ENCODE measurements at regions of chr7 and their contacts with region 1.

Region 1: GRCh38 chr7:135170274-135170997 is at the start of gene CYREN:
- DNase-seq: peak; percentile 96
- ATAC-seq: peak; percentile 90
- H3K4me3 Mint-ChIP-seq: peak within 1 kb of the TSS; percentile 83
- H3K27ac Mint-ChIP-seq: peak within 1 kb of the TSS; percentile 93
- H3K4me1 Mint-ChIP-seq: peaks cover 45% of the 10 kb centered on the region
- H3K27me3 Mint-ChIP-seq: no peaks in the 10 kb centered on the region
- CTCF ChIP-seq: peak; percentile 48
- total RNA-seq, gene CYREN: 32.5 to 35.4 TPM

Region 2: DNA sequence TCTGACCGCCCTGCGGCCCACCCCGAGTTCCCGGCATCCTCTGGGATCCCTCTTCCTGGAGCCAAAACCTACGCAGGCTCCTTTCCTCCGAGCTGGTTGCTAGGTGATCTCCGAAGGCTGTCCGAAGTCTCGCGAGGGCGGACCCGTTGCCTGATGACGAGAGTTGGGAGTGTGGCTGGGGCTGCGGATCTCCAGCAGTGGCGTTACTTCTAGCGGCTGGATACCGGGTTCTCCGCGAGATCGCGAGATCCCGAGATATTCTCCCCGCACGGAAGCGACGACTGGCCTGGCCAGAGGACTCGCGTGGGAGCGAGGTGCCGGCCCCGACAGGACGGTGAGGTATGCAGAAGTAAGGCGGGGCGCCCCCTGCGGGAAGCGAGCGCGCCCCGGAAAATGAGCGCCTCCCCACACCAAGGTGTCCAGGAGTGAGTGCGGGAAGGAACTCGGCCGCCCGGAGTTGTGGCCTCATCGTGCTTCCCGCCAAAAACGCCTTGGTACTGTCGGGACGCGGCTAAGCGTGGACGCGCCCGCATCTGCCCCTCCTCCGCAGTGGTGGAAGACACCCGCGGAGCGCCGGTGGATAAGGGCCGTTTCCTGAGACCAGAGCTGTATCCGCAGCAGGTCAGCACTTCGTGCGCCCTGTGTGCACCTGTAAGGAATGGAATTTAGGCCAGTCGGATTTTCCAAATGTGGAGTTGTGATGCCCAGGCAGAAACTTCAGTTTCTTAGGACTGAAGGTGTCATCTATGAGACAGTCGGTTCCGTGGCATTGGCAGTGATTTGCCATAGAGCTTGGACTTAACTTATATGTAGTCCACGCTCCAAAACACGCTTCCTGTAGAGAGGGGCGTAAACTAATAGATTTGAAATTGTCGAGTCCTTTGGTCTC is 183.8 kb before region 1 on chr7 and contains the start of gene AGBL3:
- CTCF ChIA-PET with region 1: interaction called, 41 read pairs
- POLR2A ChIA-PET with region 1: interaction called, 22 read pairs
- intact Hi-C with region 1: loop called (anchors 2 kb)
- DNase-seq: peak; percentile 97
- ATAC-seq: peak; percentile 93
- H3K4me3 Mint-ChIP-seq: peak within 1 kb of the TSS; percentile 97
- H3K27ac Mint-ChIP-seq: peak within 1 kb of the TSS; percentile 98
- H3K4me1 Mint-ChIP-seq: peaks cover 38% of the 10 kb centered on the region
- H3K27me3 Mint-ChIP-seq: no peaks in the 10 kb centered on the region
- CTCF ChIP-seq: peak; percentile 76
- total RNA-seq, gene AGBL3: 2.7 to 2.9 TPM

Region 3: GRCh38 chr7:134992626-134993179 is 177.7 kb before region 1 on chr7:
- CTCF ChIA-PET with region 1: interaction called, 41 read pairs
- POLR2A ChIA-PET with region 1: interaction called, 14 read pairs
- intact Hi-C with region 1: loop called (anchors 2 kb)
- DNase-seq: peak; percentile 70
- ATAC-seq: peak; percentile 79
- H3K4me3 Mint-ChIP-seq: peak overlapping the region; percentile 51
- H3K27ac Mint-ChIP-seq: peak overlapping the region; percentile 90
- H3K4me1 Mint-ChIP-seq: peaks cover 78% of the 10 kb centered on the region
- H3K27me3 Mint-ChIP-seq: no peaks in the 10 kb centered on the region
- CTCF ChIP-seq: no peak

Region 4: DNA sequence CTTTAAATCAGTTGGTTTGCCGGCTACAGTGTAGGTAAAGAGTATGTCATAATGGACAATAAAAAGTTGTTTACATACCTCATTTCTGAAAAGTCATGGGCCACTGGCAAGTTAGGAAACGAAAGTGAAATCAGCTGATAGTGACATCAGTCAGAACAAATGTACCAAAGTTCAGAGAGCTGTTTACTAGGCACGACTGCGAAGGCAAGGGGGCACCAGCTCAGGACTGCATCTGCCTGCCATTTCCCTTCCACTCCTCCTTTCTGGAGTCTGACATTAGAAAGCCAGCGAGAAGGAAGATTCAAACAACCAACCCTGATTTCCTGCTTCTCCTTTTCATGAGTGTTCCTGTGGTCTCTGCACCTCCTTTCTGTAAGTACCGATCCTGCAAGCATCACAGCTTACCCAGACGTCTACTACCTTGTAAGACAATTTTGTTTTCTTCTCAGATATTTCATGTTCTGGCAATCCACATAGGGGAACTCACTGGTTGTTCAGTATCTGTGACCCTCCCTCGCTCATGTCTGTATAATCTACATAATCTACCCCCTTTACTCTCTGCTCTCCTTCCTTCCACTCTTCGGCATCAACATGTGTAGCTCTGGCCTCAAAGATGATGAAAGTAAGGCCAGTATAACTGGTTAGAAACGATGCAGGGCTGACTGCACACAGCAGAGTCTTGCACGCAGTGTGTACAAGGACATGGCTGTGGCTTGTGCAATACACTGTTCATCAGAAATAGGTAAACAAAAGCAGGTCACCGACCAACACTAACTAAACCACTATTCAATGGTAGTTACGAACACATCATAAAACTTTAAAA is 22.3 kb before region 1 on chr7 and contains the start of gene TMEM140:
- CTCF ChIA-PET with region 1: interaction called, 44 read pairs
- POLR2A ChIA-PET with region 1: interaction called, 204 read pairs
- intact Hi-C with region 1: loop called (anchors 2 kb)
- DNase-seq: peak; percentile 74
- ATAC-seq: peak; percentile 81
- H3K4me3 Mint-ChIP-seq: peak within 1 kb of the TSS; percentile 80
- H3K27ac Mint-ChIP-seq: peak within 1 kb of the TSS; percentile 90
- H3K4me1 Mint-ChIP-seq: peaks cover 63% of the 10 kb centered on the region
- H3K27me3 Mint-ChIP-seq: no peaks in the 10 kb centered on the region
- CTCF ChIP-seq: no peak
- total RNA-seq, gene TMEM140: 6.2 to 7.6 TPM

Region 5: DNA sequence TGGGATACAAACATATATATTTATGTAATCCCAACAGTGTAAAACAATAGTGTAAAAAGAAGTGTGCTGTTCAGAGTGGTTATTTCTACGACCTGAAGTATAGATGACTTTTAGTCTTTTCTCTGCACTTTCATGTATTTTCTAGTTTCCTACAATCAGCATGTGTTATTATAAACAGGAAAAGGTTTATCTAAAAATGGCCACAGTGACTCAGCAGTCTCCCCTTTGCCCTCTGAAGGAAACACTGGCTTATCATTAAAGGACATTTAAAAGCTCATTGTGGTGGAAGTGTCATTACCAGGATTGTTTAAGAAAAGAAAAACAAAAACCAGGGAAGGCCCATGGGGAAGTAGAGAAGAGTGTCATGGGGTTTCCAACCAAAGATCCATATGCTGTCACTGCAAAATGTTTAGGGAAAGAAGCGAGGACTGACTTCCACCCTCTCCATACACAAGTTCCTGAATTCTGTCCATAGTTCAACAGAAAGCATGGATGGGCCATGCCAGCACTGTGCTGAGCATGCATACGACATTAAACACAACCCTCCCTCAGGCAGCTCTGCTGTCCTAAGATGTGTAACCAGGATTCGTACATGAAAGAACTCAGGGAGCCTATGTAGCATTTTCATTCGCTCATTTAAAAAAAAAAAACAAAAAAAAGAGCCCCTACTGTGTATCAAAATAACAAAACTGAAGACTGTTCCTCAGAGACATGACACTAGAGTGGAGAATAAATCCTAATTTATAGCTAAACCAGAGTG is 10.2 kb before region 1 on chr7:
- CTCF ChIA-PET with region 1: interaction called, 18 read pairs
- POLR2A ChIA-PET with region 1: interaction called, 22 read pairs
- intact Hi-C with region 1: no loop called
- DNase-seq: no peak
- ATAC-seq: peak; percentile 62
- H3K4me3 Mint-ChIP-seq: no peak overlapping the region
- H3K27ac Mint-ChIP-seq: peak overlapping the region; percentile 85
- H3K4me1 Mint-ChIP-seq: peaks cover 47% of the 10 kb centered on the region
- H3K27me3 Mint-ChIP-seq: no peaks in the 10 kb centered on the region
- CTCF ChIP-seq: no peak

Region 6: DNA sequence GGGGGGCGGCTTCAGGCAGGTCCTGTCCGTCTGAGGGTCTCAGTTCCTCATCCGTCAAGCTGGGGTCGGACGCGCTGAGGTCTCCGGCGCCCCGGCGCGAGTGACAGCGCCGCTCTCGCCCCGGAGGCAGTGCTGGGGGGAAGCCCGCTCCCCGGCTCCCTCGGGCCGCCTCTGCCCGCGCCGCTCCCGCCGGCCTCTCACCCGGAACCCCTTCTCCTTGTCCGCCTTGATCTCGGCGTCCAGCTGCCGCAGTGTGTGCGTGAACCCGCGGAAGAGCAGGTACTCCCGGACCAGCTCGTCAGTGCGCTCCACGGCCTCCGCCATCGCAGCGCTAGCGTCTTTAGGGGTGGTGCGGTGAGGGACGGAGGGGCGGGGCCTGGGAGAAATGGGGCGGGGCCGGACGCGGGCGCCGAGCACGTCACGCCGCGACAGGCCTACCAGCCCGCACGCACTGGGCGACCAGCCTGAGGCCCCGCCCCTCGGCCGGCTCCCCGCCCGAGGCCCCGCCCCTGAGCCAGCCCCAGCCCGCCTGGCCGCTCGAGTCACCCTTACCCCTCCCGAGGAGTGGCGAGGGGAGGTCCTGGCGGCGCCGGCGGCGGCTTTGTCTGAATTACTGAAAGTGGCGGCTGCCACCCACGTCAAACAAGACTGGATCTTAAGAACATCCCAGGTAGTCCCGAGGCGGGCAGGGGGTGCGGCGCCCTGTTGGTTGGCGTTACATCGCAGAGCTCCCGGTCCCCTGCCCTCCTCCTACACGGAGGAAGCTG is 40.9 kb after region 1 on chr7 and contains the start of gene WDR91:
- CTCF ChIA-PET with region 1: interaction called, 10 read pairs
- POLR2A ChIA-PET with region 1: interaction called, 17 read pairs
- intact Hi-C with region 1: no loop called
- DNase-seq: peak; percentile 95
- ATAC-seq: peak; percentile 96
- H3K4me3 Mint-ChIP-seq: peak within 1 kb of the TSS; percentile 88
- H3K27ac Mint-ChIP-seq: peak within 1 kb of the TSS; percentile 97
- H3K4me1 Mint-ChIP-seq: peaks cover 29% of the 10 kb centered on the region
- H3K27me3 Mint-ChIP-seq: peaks cover 1% of the 10 kb centered on the region
- CTCF ChIP-seq: no peak
- total RNA-seq, gene WDR91: 12.9 to 13.1 TPM

Region 7: GRCh38 chr7:135406918-135407317 is 236.5 kb after region 1 on chr7:
- CTCF ChIA-PET with region 1: no interaction called
- POLR2A ChIA-PET with region 1: no interaction called
- intact Hi-C with region 1: no loop called
- DNase-seq: no peak
- ATAC-seq: peak; percentile 17
- H3K4me3 Mint-ChIP-seq: no peak overlapping the region
- H3K27ac Mint-ChIP-seq: no peak overlapping the region
- H3K4me1 Mint-ChIP-seq: peaks cover 5% of the 10 kb centered on the region
- H3K27me3 Mint-ChIP-seq: no peaks in the 10 kb centered on the region
- CTCF ChIP-seq: no peak